Psoas muscle (tissue), 8 donors: ENCODE measurements at regions of chr6 and their contacts with region 1.

Region 1: DNA sequence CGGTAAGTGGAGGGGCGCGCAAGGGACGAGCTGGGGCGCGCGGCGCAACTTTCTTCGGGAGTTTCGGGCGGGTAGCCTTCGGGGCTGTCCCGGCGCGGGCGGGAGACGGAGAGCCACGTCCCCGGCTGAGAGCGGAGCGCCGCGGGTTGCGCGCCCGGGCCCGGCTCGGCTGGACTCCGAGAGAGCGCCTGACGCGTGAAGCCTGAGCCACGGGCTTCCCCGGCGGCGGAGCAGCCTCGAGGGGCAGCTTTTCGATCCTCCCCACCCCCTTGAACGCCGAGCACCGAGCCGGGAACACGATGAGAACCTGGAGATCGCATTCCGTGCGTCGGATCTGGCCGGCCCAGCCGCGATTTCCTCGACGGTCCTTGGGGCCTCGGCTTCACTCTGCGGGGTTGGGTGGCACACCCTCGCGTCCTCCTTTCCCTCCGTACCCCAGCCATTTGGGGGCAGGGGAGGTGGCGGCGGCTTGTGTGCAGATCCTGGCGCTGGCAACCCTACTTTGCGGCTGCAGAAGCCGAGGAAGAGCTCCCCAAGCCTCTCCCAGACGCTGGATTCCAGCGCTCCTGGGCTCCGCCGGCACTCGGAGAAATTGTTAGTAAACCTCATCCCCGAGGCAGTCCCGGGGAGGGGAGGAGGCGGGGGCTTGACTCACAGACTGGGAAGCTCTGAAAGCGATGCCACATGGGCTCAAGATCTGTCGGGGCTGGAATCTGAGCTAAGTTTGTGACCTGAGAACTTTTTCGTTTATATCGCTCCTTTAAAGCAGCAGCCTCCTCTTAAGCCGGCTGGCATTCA is 572 bp downstream of the DSE start:
- DNase-seq: peak; percentile 85 to 91
- ATAC-seq: peak; percentile 87 to 91 (median 88)
- H3K4me3 ChIP-seq: peak overlapping the region; percentile 97
- H3K27ac ChIP-seq: peak overlapping the region; percentile 95
- H3K4me1 ChIP-seq: peaks cover 9% of the 10 kb centered on the region
- H3K27me3 ChIP-seq: no peaks in the 10 kb centered on the region
- CTCF ChIP-seq: no peak

Region 2: DNA sequence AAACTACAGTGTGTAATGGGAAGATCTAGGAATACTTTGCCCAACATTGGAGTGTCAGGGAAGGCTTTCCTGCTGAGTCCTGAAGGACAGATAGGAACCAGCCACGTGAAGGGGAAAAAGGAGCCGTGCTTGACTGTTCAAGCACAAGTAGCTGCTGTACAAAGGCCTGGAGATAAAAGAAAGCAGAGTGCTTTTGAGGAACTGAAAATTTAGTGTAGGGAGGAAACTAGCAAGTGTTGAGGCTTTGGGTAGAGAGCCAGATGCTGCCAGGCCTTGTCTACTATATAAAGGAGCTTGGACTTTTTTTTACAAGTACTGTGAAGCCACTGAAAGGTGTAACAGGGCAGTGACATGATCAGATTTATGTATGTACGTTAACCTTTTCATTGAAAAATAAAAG is 38.4 kb after region 1 on chr6:
- intact Hi-C with region 1: loop called in 1 of 2 experiments (anchors 5 kb)
- DNase-seq: no peak
- ATAC-seq: no peak
- H3K4me3 ChIP-seq: no peak overlapping the region
- H3K27ac ChIP-seq: peak overlapping the region; percentile 86
- H3K4me1 ChIP-seq: peaks cover 68% of the 10 kb centered on the region
- H3K27me3 ChIP-seq: no peaks in the 10 kb centered on the region
- CTCF ChIP-seq: no peak

Region 3: GRCh38 chr6:116419069-116419786 is 47.9 kb after region 1 on chr6:
- intact Hi-C with region 1: loop called (anchors 5 kb)
- DNase-seq: no peak
- ATAC-seq: no peak
- H3K4me3 ChIP-seq: no peak overlapping the region
- H3K27ac ChIP-seq: peak overlapping the region; percentile 38
- H3K4me1 ChIP-seq: peaks cover 18% of the 10 kb centered on the region
- H3K27me3 ChIP-seq: no peaks in the 10 kb centered on the region
- CTCF ChIP-seq: no peak